ENCODE measurements at regions of chr1 and their contacts with region 1.

Region 1: GRCh38 chr1:217048104-217048721 is 325.0 kb upstream of the ESRRG start:
- DNase-seq: peak; percentile 43 to 78
- H3K4me3 ChIP-seq: no peak overlapping the region
- H3K27ac ChIP-seq: no peak overlapping the region
- H3K4me1 ChIP-seq: no peaks in the 10 kb centered on the region
- H3K27me3 ChIP-seq: no peaks in the 10 kb centered on the region
- CTCF ChIP-seq: peak; percentile 68 to 92 (median 83)
- EP300 ChIP-seq: no peak
- POLR2A ChIP-seq: no peak
- RAD21 ChIP-seq: peak; percentile 65 to 74

Region 2: GRCh38 chr1:217029281-217030157 is 18.7 kb before region 1 on chr1:
- CTCF ChIA-PET with region 1: interaction called, 15 read pairs
- POLR2A ChIA-PET with region 1: no interaction called
- DNase-seq: no peak
- H3K4me3 ChIP-seq: no peak overlapping the region
- H3K27ac ChIP-seq: no peak overlapping the region
- H3K4me1 ChIP-seq: no peaks in the 10 kb centered on the region
- H3K27me3 ChIP-seq: no peaks in the 10 kb centered on the region
- CTCF ChIP-seq: no peak
- EP300 ChIP-seq: no peak
- POLR2A ChIP-seq: no peak
- RAD21 ChIP-seq: no peak

Region 3: GRCh38 chr1:217063172-217063908 is 15.1 kb after region 1 on chr1:
- CTCF ChIA-PET with region 1: interaction called, 31 read pairs
- POLR2A ChIA-PET with region 1: no interaction called
- DNase-seq: no peak
- H3K4me3 ChIP-seq: no peak overlapping the region
- H3K27ac ChIP-seq: no peak overlapping the region
- H3K4me1 ChIP-seq: peaks cover 0 to 3% (median 0%) of the 10 kb centered on the region in 4 experiments; a peak in 1 of 7 replicates
- H3K27me3 ChIP-seq: no peaks in the 10 kb centered on the region
- CTCF ChIP-seq: no peak
- EP300 ChIP-seq: no peak
- POLR2A ChIP-seq: no peak
- RAD21 ChIP-seq: no peak

Measured in H1 (cell line).